Sigmoid colon (tissue), 7 donors: ENCODE measurements at regions of chr12 and their contacts with region 1.

Region 1: GRCh38 chr12:9707864-9708808 is 24.8 kb downstream of the CLECL1 start:
- DNase-seq: no peak
- H3K4me3 ChIP-seq: no peak overlapping the region
- H3K27ac ChIP-seq: no peak overlapping the region
- H3K4me1 ChIP-seq: no peaks in the 10 kb centered on the region
- H3K27me3 ChIP-seq: no peaks in the 10 kb centered on the region
- CTCF ChIP-seq: peak; percentile 29 to 63 (median 56)
- EP300 ChIP-seq: no peak
- POLR2A ChIP-seq: no peak

Region 2: GRCh38 chr12:9144730-9145106 is 563.4 kb before region 1 on chr12:
- intact Hi-C with region 1: no loop called
- DNase-seq: no peak
- H3K4me3 ChIP-seq: no peak overlapping the region
- H3K27ac ChIP-seq: no peak overlapping the region
- H3K4me1 ChIP-seq: no peaks in the 10 kb centered on the region
- H3K27me3 ChIP-seq: no peaks in the 10 kb centered on the region
- CTCF ChIP-seq: no peak
- EP300 ChIP-seq: no peak
- POLR2A ChIP-seq: no peak

Region 3: GRCh38 chr12:9331218-9331626 is 376.9 kb before region 1 on chr12:
- intact Hi-C with region 1: loop called (anchors 2 kb)
- DNase-seq: no peak
- H3K4me3 ChIP-seq: no peak overlapping the region
- H3K27ac ChIP-seq: no peak overlapping the region
- H3K4me1 ChIP-seq: peaks cover 0 to 7% (median 0%) of the 10 kb centered on the region in 4 donors
- H3K27me3 ChIP-seq: no peaks in the 10 kb centered on the region
- CTCF ChIP-seq: peak; percentile 72 to 95 (median 83)
- EP300 ChIP-seq: no peak
- POLR2A ChIP-seq: no peak

Region 4: GRCh38 chr12:9634177-9634803 is 73.8 kb before region 1 on chr12:
- intact Hi-C with region 1: loop called (anchors 10 kb)
- DNase-seq: no peak
- H3K4me3 ChIP-seq: no peak overlapping the region
- H3K27ac ChIP-seq: no peak overlapping the region
- H3K4me1 ChIP-seq: no peaks in the 10 kb centered on the region
- H3K27me3 ChIP-seq: no peaks in the 10 kb centered on the region
- CTCF ChIP-seq: peak in 2 of 4 experiments; percentile 30 to 54
- EP300 ChIP-seq: no peak
- POLR2A ChIP-seq: no peak